ENCODE measurements at regions of chr16 and their contacts with region 1.

Region 1: DNA sequence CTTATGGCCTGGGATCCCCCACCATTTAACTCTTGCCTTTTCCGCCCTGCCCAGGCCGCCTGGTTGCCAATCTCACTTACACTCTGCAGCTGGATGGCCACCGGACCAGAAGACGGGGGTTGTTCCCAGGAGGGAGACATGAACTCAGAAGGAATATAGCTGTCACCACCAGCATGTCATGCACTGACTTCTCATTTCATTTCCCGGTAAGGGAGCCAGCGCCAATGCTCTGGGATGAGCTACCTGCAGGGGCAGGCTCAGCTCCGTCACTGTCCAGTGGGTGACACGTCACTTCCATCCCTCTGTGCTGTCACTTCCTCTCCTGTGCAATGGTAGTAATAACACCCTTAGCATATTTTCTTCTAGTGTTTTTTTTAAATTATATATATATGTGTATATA is 26.7 kb downstream of the ITGAL start:
- DNase-seq: no peak
- ATAC-seq: no peak
- H3K4me3 Mint-ChIP-seq: no peak overlapping the region
- H3K27ac Mint-ChIP-seq: peak overlapping the region; percentile 14
- H3K4me1 Mint-ChIP-seq: peaks cover 11% of the 10 kb centered on the region
- H3K27me3 Mint-ChIP-seq: no peaks in the 10 kb centered on the region

Region 2: DNA sequence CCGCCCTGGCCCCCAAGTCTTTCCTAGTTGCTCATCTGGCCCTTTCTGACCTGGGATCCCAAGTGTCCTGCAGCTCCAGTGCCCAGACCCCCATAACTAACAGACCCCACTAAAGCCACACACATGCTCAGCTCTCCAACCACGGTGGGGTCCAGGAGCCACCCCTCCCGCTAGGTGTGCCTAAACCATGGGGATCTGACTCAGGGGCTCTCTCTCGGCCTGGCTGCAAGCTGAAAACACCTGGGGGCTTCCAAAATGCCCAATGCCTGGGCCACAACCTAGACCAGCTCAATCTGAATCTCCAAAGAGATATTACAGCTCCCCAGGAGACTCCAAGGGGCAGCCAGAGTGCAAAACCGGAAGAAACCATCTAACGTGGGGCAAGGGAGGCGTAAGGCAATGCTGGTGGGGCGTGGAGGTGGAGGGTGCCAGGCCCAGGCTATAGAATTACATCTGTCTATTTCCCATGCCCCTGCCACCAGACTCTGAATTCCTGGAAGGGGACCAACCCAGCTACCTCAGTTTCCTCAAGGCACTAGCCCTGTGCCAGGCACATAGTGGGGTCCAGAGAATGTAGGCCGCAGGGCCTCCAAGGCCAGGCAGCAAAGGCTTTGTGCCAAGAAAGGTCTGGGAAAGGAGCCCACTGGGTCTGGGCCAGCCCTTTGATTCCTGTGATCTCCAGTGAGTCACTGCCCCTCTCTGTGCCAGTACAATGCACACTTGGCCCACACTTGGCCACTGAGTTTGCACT is 147.5 kb before region 1 on chr16:
- CTCF ChIA-PET with region 1: no interaction called
- POLR2A ChIA-PET with region 1: no interaction called
- DNase-seq: no peak
- ATAC-seq: no peak
- H3K4me3 Mint-ChIP-seq: no peak overlapping the region
- H3K27ac Mint-ChIP-seq: peak overlapping the region; percentile 61
- H3K4me1 Mint-ChIP-seq: peaks cover 64% of the 10 kb centered on the region
- H3K27me3 Mint-ChIP-seq: no peaks in the 10 kb centered on the region

Region 3: GRCh38 chr16:30472328-30472942 is 26.8 kb before region 1 on chr16 and contains the start of gene ITGAL:
- CTCF ChIA-PET with region 1: no interaction called
- POLR2A ChIA-PET with region 1: interaction called, 10 read pairs
- DNase-seq: peak; percentile 92
- ATAC-seq: peak; percentile 85
- H3K4me3 Mint-ChIP-seq: peak within 1 kb of the TSS; percentile 98
- H3K27ac Mint-ChIP-seq: peak within 1 kb of the TSS; percentile 96
- H3K4me1 Mint-ChIP-seq: peaks cover 61% of the 10 kb centered on the region
- H3K27me3 Mint-ChIP-seq: no peaks in the 10 kb centered on the region
- total RNA-seq, gene ITGAL: 458 to 471 TPM

Region 4: GRCh38 chr16:30488744-30489605 is 10.3 kb before region 1 on chr16:
- CTCF ChIA-PET with region 1: interaction called, 3 read pairs
- POLR2A ChIA-PET with region 1: interaction called, 20 read pairs
- DNase-seq: no peak
- ATAC-seq: no peak
- H3K4me3 Mint-ChIP-seq: no peak overlapping the region
- H3K27ac Mint-ChIP-seq: peak overlapping the region; percentile 60
- H3K4me1 Mint-ChIP-seq: peaks cover 57% of the 10 kb centered on the region
- H3K27me3 Mint-ChIP-seq: no peaks in the 10 kb centered on the region